Activated B cell treated with CpG ODN at 0.5 μM for 24 hours (primary cell): ENCODE measurements at regions of chr6 and their contacts with region 1.

Region 1: DNA sequence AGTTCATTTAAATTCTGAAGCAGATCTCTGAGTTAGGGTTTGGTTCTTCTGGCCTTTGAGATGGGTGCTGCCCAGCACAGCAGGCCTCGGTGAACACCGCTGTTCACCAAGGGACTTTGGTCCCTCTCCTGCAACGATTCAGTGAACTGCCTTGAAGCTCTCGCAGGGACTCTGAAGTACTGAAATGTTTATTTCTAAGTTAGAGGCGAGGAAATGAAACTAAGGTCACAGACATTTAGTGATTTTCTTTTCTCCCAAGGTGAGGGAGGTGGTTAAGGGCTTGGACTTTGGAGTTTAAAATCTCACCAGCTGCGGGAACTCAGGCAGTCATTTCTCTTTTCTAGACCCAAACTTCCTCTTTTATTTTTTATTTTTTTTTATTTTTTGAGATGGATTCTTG is 26.2 kb downstream of the E2F3 start:
- DNase-seq: no peak
- ATAC-seq: peak; percentile 68
- H3K4me3 Mint-ChIP-seq: peak overlapping the region; percentile 70
- H3K27ac Mint-ChIP-seq: peak overlapping the region; percentile 80
- H3K4me1 Mint-ChIP-seq: peaks cover 32% of the 10 kb centered on the region
- H3K27me3 Mint-ChIP-seq: no peaks in the 10 kb centered on the region
- CTCF ChIP-seq: no peak

Region 2: GRCh38 chr6:20467437-20467836 is 39.6 kb after region 1 on chr6:
- CTCF ChIA-PET with region 1: no interaction called
- POLR2A ChIA-PET with region 1: no interaction called
- intact Hi-C with region 1: loop called (anchors 5 kb)
- DNase-seq: no peak
- ATAC-seq: no peak
- H3K4me3 Mint-ChIP-seq: no peak overlapping the region
- H3K27ac Mint-ChIP-seq: no peak overlapping the region
- H3K4me1 Mint-ChIP-seq: peaks cover 25% of the 10 kb centered on the region
- H3K27me3 Mint-ChIP-seq: no peaks in the 10 kb centered on the region
- CTCF ChIP-seq: no peak